ENCODE measurements at regions of chr1 and their contacts with region 1.

Region 1: DNA sequence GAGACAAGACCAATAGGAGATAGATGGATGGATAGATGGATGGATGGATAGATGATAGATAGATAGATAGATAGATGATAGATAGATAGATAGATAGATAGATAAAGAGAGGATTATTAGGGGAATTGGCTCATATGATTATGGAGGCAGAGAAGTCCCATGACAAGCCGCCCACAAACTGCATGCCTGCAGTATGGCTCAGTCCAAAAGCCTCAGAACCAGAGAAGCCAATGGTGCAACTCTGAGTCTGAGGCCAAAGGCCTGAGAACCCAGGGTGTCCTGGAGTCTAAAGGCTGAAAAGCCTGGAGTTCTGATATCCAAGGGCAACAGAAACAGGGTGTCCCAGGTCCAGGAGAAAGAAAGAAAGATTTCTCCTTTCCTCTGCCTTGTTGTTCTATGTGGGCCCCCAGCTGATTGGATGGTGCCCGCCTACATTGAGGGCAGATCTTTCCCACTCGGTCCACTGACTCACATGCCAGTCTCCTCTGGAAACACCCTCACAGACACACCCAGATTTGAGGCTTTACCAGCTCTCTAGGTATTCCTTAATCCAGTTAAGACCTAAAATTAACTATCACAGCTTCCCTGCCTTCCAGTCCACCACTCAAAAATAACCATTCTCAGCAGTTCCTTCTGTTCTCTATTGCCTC is 39.6 kb upstream of the IRF2BP2 start:
- DNase-seq: no peak
- ATAC-seq: no peak
- H3K4me3 ChIP-seq: no peak overlapping the region
- H3K27ac ChIP-seq: no peak overlapping the region
- H3K4me1 ChIP-seq: no peaks in the 10 kb centered on the region
- H3K27me3 ChIP-seq: no peaks in the 10 kb centered on the region

Region 2: GRCh38 chr1:234573711-234574299 is 75.8 kb before region 1 on chr1:
- intact Hi-C with region 1: loop called in 1 of 2 experiments (anchors 5 kb)
- DNase-seq: no peak
- ATAC-seq: no peak
- H3K4me3 ChIP-seq: no peak overlapping the region
- H3K27ac ChIP-seq: no peak overlapping the region
- H3K4me1 ChIP-seq: no peaks in the 10 kb centered on the region
- H3K27me3 ChIP-seq: no peaks in the 10 kb centered on the region

Region 3: DNA sequence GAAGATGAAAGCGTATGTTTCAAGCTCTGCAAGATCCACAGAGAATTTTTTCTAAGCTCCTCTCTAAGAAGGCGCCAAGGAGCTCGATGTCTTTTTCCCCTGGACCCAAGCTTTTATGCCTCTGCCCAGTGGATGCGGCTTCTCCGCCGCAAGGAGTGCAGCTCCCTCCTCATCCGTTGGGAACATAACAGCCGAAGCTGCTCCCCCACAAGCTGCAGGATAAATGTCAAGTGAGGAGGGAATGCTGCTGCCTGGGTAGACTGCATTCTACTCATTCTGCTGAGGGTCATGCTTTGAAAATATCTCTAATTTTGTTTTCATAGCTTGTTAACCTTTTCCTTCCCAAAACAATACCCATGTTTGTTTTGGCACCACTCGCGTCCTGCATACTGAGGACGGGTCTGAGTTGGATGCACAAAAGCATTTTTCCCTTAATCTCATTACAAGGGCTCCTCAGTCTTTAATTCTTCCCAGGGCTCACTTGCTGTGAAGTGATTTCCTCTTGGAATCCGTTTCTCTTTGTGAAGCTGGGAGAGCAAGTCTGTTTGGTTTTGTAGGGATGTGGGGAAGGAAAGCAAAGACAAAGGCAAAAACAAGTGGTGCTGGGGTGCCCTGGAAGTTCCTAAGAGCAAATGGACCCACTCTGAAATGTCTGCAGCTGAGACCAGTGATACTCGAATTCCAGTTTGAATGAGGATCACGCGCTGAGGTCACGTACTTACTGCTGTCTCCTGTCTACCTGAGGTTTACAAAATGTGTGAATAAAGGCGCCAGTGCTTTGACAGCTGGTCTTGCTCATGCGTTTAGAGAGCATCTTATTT is 94.4 kb after region 1 on chr1:
- intact Hi-C with region 1: no loop called
- DNase-seq: no peak
- ATAC-seq: peak; percentile 71
- H3K4me3 ChIP-seq: no peak overlapping the region
- H3K27ac ChIP-seq: peak overlapping the region in 1 of 2 donors; percentile 15
- H3K4me1 ChIP-seq: no peaks in the 10 kb centered on the region
- H3K27me3 ChIP-seq: no peaks in the 10 kb centered on the region